Activated CD8-positive, alpha-beta T cell treated with anti-CD3 and anti-CD28 coated beads, Interleukin-2, amount 10 ng/mL, durations not matched to agents 7 days and 5 days (primary cell): ENCODE measurements at regions of chr10 and their contacts with region 1.

Region 1: DNA sequence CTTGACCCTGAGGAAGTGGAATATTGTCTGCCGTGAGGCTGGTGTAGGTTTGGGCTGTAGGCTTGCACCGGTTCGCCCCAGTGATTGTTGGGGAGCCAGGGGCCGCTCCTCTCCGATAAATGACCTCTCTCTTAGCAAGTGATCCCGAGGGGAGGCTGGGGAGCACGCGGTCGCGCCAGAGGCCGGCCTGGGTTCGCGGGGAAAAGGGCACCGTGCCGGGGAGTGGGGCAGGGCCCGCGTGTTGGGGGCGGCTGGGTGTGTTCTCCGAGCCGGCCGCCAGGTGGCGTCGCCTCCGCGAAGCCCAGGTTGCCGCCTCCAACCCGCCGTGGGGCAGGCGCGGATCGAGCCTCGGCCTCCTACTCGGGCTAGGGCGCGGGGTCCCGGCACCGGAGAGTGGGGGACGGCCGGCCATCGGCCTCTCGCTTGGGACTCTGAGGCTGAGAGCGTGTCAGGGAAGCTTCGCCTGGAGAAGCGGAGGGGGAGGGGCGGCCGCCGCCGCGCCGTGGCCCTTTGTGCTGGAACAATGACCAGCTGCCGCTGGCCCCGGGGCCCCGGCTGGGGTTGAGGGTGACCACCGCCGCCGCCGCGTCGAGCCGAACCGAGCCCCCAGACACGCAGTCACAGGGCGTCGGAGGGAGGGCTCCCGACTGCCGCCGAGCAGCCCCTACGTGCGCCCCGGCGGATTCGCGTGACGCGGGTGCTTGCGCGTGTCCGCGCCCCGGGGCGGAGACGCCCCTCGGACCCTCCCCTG is 442 bp upstream of the LZTS2 start:
- DNase-seq: peak; percentile 80
- ATAC-seq: peak; percentile 65
- H3K4me3 Mint-ChIP-seq: peak overlapping the region; percentile 75
- H3K27ac Mint-ChIP-seq: peak overlapping the region; percentile 86
- H3K4me1 Mint-ChIP-seq: peaks cover 25% of the 10 kb centered on the region
- H3K27me3 Mint-ChIP-seq: peaks cover 3% of the 10 kb centered on the region

Region 2: DNA sequence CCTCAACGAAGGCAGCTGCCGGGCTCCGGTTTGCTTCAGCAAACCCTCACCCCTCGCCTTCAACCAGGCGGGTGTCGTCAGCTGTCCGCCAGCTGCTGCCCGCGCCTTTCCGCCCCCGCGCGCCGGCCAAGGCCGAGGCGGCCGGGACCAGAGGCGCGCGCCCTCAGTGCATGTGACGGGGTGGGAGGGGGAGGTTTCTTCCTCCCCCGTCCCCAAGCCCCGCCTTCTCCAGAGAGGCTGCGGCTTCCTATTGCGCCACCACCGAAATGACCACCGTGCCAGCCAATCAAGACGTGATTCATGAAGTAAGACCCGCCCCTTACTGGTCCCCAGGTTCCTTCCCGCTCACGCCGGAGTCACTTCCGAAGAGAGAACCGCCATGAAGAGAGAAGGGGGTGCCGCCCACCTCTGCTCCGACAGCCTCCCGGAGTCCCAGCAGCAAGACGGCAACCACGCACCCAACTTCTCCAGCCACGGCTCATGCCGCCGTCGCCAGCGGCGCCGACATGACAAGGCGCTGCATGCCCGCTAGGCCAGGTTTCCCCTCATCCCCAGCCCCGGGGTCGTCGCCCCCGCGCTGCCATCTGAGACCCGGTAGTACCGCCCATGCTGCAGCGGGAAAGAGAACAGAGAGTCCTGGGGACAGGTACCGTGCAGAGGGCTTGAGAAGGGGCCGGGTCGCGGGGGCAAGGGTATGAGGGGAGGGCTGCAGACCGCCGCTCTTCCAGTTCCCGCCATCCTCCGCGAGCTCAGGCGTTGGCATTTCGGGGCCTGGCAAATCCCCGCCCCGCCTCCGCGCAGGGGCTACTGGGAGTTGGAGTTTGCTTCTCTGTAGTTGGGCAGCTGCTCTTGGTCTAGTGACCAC is 86.3 kb before region 1 on chr10 and contains the start of gene SLF2:
- CTCF ChIA-PET with region 1: interaction called, 10 read pairs
- POLR2A ChIA-PET with region 1: interaction called, 3 read pairs
- DNase-seq: peak; percentile 97
- ATAC-seq: peak; percentile 96
- H3K4me3 Mint-ChIP-seq: peak within 1 kb of the TSS; percentile 99
- H3K27ac Mint-ChIP-seq: peak within 1 kb of the TSS; percentile 96
- H3K4me1 Mint-ChIP-seq: peaks cover 54% of the 10 kb centered on the region
- H3K27me3 Mint-ChIP-seq: no peaks in the 10 kb centered on the region
- total RNA-seq, gene SLF2: 42.8 to 44.4 TPM

Region 3: GRCh38 chr10:100986952-100987750 is 12.0 kb before region 1 on chr10 and contains the starts of genes MRPL43 and TWNK:
- CTCF ChIA-PET with region 1: interaction called, 60 read pairs
- POLR2A ChIA-PET with region 1: interaction called, 5 read pairs
- DNase-seq: peak; percentile 90
- ATAC-seq: peak; percentile 96
- H3K4me3 Mint-ChIP-seq: peak within 1 kb of the TSS; percentile 88
- H3K27ac Mint-ChIP-seq: peak within 1 kb of the TSS; percentile 79
- H3K4me1 Mint-ChIP-seq: peaks cover 44% of the 10 kb centered on the region
- H3K27me3 Mint-ChIP-seq: no peaks in the 10 kb centered on the region
- total RNA-seq, gene MRPL43: 46.1 to 48.9 TPM
- total RNA-seq, gene TWNK: 11.8 to 13.3 TPM

Region 4: DNA sequence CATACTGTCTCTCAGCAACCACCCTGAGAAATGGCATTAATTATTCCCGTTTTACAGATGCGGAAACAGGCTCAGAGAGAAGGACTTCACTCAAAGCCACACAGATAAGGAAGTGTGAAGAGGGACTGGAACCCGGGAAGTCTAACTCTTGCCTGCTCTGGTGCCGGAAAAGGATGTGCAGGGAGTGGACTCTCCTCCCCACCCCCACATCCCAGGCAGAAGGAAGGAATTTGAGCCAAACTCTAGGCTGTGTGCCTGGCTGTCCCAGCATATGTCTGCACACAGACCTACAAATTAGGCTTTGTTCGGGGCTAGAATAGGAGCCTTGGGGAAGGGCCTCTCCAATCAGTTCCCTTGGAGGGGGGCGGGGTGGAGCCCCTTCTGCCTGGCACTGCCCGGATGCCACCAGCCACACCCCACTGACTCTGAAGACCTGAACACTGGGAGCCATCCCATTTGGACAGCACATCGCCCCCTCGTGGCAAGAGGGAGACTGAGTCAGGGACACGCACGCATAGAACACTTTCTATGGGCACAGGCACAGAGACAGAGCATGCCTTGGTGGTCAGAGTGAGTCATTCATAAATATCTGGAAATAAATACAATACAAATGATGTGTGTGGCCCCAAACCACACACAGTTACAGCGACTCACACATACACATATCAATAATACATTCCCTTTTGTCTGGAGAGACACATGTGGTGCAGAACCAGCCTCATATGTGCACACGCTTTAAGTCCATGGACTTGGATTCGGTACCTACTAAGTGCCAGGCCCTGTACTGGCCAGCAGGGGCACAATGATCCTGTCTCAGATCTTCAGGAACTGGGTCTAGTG is 13.6 kb after region 1 on chr10:
- CTCF ChIA-PET with region 1: interaction called, 154 read pairs
- POLR2A ChIA-PET with region 1: interaction called, 3 read pairs
- DNase-seq: peak; percentile 88
- ATAC-seq: peak; percentile 94
- H3K4me3 Mint-ChIP-seq: no peak overlapping the region
- H3K27ac Mint-ChIP-seq: no peak overlapping the region
- H3K4me1 Mint-ChIP-seq: peaks cover 16% of the 10 kb centered on the region
- H3K27me3 Mint-ChIP-seq: peaks cover 31% of the 10 kb centered on the region

Region 5: DNA sequence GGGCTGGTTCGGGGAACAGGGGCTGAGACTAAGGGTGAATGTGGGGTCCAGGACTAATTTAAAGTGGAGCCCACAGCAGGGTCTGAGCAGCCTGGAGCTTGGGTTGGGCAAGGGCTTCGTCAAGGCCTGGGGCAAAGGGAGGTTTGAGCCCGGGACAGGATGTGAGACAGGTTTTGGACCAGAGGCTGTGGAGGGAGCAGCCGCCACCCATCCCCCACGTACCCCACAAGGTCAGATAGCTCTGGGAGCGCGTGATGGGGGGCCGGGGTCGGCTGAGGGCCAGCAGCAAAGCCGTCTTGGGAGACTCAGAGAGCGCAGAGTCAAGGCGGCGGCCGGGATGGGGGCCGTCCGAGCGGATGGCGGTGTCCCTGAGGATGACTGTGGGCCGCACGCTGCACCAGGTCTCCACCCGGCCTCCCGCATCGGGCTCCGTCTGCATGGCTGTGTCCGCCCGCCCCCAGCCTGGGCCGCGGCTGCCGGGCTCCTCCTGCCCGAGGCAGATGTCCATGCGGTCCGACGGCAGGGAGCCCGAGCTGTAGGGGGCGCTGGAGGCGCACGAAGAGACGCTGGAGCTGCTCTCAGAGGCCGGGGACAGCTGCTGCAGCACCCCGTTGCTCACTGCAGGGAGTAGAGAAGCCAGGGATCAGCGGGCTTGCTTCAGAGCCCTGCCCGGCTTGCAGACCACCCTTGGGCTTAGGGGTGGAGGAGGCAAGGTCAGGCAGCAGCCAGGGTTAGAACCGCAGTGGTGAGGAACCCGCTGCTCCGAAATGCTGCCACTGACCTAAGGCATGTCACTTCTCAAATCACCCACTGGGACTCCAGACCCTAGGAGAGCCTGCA is 19.7 kb after region 1 on chr10:
- CTCF ChIA-PET with region 1: interaction called, 154 read pairs
- POLR2A ChIA-PET with region 1: no interaction called
- DNase-seq: peak; percentile 83
- ATAC-seq: peak; percentile 90
- H3K4me3 Mint-ChIP-seq: no peak overlapping the region
- H3K27ac Mint-ChIP-seq: no peak overlapping the region
- H3K4me1 Mint-ChIP-seq: peaks cover 10% of the 10 kb centered on the region
- H3K27me3 Mint-ChIP-seq: peaks cover 43% of the 10 kb centered on the region

Region 6: DNA sequence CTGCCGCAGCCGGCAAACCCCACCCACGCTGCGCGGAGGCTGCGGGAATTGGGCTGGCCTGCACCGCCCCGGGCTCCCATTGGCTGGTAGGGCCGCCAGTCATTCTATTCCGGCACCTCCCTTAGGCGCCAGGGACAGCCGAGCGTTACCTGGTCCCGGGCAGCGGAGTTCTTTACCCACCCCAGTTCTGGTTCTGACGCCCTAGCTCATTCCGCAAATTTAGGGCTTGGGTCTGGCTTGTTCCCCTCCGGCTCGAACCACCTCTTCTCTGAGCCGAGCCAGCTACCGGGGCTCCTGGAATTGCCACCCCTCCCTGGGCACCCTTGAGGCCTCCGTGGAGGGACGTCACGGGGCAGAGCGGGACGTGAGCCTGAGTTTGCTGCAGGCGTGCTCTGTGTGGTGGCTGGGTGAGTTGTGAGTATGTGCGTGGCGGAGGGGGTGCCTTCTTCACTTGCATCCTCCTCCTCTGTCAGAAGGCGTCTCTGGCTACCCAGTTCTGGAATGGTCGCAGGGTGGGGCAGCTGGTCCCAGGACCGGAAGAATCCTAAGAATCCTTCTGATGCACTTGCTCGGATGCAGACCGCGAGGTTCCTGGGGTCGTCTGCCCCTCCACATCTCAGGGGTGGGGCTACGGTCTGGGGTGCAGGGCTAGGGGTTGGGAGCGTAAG is 32.1 kb after region 1 on chr10 and contains the starts of genes PDZD7 and SFXN3:
- CTCF ChIA-PET with region 1: interaction called, 22 read pairs
- POLR2A ChIA-PET with region 1: interaction called, 5 read pairs
- DNase-seq: peak; percentile 97
- ATAC-seq: peak; percentile 90
- H3K4me3 Mint-ChIP-seq: peak within 1 kb of the TSS; percentile 79
- H3K27ac Mint-ChIP-seq: peak within 1 kb of the TSS; percentile 90
- H3K4me1 Mint-ChIP-seq: peaks cover 20% of the 10 kb centered on the region
- H3K27me3 Mint-ChIP-seq: peaks cover 17% of the 10 kb centered on the region
- total RNA-seq, gene PDZD7: 0.47 to 0.50 TPM
- total RNA-seq, gene SFXN3: 24.7 to 24.8 TPM

Region 7: DNA sequence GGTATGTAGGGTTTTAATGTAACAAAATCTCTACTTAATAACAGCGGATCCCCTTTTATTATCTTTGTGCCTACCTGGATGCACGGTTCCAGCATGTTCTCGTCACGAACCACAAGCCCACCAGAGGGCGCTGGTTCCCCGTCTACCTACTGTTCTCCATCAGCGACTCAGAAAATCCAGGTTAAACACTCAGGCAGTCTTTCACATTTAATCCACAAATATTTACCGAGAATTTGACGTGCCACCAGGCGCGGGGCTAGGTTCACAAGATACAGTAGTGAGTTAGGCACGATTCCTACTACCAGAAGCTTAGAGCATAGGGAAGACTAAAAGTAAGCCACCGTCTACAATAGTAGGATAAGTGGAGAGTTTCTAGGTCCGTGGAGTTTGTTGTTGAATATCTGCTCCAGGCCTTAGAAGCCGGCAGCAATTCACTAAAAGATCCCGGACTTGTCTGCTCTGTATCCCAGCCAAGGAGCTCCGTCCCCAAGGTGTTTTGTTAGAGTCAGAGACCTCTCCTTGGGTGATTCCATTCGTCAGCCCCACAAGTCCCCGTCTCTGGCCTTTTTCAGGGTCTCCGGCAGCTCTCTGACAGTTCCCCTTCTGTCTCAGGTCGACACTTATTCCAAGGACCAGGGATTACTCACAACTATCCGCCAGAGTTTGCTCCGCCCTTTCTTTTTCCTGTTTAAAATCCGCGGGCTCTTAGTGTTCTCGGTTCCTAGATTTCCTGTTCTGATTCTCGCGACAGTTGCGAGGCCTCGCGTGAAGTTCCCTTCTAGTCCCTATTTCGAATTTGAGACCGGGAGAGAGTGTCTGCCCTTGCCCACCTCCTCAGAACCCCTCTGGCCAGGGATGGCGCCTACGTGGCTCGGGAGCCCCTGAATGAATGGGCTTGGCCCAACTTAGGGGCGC is 61.1 kb after region 1 on chr10:
- CTCF ChIA-PET with region 1: interaction called, 10 read pairs
- POLR2A ChIA-PET with region 1: interaction called, 3 read pairs
- DNase-seq: peak; percentile 93
- ATAC-seq: peak; percentile 75
- H3K4me3 Mint-ChIP-seq: peak overlapping the region; percentile 88
- H3K27ac Mint-ChIP-seq: peak overlapping the region; percentile 96
- H3K4me1 Mint-ChIP-seq: peaks cover 47% of the 10 kb centered on the region
- H3K27me3 Mint-ChIP-seq: peaks cover 23% of the 10 kb centered on the region

Region 8: DNA sequence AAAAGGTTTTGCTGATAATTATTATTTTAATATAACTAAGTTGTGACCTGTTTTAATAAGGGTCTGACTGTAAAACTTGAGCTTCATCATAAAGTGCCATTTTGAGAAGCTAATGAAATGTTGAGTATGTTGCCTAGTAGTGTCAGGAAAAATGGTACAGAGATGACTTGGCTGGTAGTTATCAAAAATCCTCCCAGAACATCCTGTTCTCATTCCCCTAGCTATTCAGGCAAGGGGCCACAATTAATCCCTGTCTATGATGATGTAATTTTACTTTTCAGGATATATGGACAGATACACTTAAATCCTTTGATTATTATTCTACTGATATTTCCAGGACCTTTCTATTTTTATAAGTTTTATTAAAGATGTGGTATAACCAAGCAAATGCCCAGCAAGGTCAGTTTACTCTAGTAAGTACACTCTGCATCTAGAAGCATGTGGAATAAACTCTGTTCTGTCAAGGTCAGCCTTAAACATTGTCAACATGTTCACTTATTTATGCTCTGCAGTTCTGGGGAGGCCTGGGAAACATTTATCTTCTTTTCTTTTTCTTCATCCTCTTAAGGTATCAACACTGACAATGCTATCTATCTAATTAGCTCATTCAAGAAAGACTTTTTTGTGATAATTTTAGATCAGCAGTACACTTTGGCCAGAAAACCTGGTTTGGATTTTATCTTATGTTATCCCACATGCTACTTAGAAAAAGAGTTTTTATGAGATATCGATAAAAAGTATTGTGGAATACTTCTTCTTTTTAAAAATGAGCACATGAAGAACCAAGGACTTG is 386.9 kb after region 1 on chr10:
- CTCF ChIA-PET with region 1: no interaction called
- POLR2A ChIA-PET with region 1: no interaction called
- DNase-seq: no peak
- ATAC-seq: no peak
- H3K4me3 Mint-ChIP-seq: no peak overlapping the region
- H3K27ac Mint-ChIP-seq: no peak overlapping the region
- H3K4me1 Mint-ChIP-seq: no peaks in the 10 kb centered on the region
- H3K27me3 Mint-ChIP-seq: no peaks in the 10 kb centered on the region